ENCODE measurements at regions of chr7 and their contacts with region 1.

Region 1: DNA sequence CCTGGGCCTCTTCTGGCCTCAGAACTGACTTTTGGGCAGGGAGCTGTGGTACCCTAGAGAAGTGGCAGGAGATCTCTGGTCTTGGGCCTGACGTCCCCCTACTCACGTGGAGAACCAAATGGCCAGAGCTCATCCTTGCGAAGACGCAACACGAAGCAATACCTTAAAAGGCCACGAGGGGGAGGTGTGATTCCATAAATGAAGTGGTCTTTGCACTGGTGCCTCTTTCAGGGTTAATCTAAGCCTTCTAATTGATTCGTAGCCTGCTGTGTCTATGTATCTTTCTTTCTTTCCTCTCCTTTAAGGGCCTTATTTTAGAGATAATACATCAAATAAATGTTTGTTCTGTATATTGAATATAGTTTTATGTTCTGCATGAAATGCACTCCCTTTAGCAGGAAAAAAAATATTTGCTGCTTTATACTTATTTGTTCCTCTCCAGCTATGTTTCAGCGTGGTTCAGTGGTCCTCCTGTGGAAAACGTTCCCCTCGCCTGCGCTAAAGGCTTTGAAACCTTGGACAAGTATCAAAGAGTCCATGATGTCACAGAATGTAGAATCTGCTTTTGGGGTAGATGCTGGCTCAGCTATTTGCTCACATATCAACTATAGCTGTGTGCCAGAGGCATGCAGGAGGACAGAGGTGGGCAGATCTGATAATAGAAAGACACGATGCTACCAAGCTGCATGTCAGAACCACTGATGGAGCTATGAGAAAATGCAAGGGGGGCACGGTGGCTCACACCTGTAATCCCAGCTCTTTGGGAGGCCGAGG is 41.0 kb downstream of the STRA8 start:
- DNase-seq: peak; percentile 86
- ATAC-seq: peak; percentile 88
- H3K4me3 Mint-ChIP-seq: no peak overlapping the region
- H3K27ac Mint-ChIP-seq: no peak overlapping the region
- H3K4me1 Mint-ChIP-seq: no peaks in the 10 kb centered on the region
- H3K27me3 Mint-ChIP-seq: peaks cover 4% of the 10 kb centered on the region

Region 2: DNA sequence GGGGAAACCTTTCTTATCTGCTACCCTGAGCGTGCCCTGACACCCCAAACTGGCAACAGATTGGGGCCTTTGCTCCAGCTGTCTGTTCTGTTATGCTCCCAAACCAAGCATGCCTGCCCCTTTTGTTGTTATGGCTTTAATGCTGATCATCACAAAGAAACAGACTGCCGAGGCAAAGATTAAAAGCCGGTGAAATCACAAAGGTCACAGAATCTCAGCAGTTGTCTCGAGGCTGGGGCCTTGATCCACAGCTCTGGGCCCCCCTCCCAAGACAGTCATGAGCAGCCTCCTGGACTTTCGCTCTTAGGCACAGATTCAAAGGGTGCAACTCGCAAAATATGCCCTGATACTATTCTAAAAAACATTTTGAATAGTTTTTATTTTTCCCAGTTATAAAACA is 24.6 kb after region 1 on chr7:
- CTCF ChIA-PET with region 1: interaction called, 20 read pairs
- POLR2A ChIA-PET with region 1: no interaction called
- intact Hi-C with region 1: no loop called
- DNase-seq: no peak
- ATAC-seq: no peak
- H3K4me3 Mint-ChIP-seq: no peak overlapping the region
- H3K27ac Mint-ChIP-seq: no peak overlapping the region
- H3K4me1 Mint-ChIP-seq: no peaks in the 10 kb centered on the region
- H3K27me3 Mint-ChIP-seq: peaks cover 8% of the 10 kb centered on the region

Region 3: GRCh38 chr7:135328053-135328452 is 53.4 kb after region 1 on chr7:
- CTCF ChIA-PET with region 1: no interaction called
- POLR2A ChIA-PET with region 1: no interaction called
- intact Hi-C with region 1: no loop called
- DNase-seq: no peak
- ATAC-seq: no peak
- H3K4me3 Mint-ChIP-seq: no peak overlapping the region
- H3K27ac Mint-ChIP-seq: no peak overlapping the region
- H3K4me1 Mint-ChIP-seq: peaks cover 2% of the 10 kb centered on the region
- H3K27me3 Mint-ChIP-seq: peaks cover 1% of the 10 kb centered on the region

Region 4: DNA sequence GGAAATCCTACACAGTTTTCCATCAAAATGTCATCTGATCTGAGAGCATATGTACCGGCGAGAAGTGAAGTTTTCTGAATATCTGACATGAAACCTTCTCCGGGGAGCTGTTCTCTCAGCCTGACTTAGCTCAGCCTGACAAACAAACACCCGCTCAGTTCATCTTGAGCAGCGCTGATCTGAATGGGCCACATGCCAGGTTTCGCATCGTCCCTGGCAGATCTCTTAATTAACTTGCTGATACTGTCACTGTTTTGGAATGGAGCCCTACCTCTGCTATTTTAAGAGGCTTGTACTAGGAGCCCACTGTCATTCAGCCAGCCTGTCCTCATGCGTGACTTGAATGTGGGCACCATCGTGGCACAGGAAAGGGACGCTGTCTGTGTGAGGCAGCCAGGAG is 68.2 kb after region 1 on chr7:
- CTCF ChIA-PET with region 1: interaction called, 15 read pairs
- POLR2A ChIA-PET with region 1: no interaction called
- intact Hi-C with region 1: no loop called
- DNase-seq: no peak
- ATAC-seq: no peak
- H3K4me3 Mint-ChIP-seq: no peak overlapping the region
- H3K27ac Mint-ChIP-seq: no peak overlapping the region
- H3K4me1 Mint-ChIP-seq: no peaks in the 10 kb centered on the region
- H3K27me3 Mint-ChIP-seq: no peaks in the 10 kb centered on the region

Region 5: GRCh38 chr7:135634191-135634878 is 359.7 kb after region 1 on chr7:
- CTCF ChIA-PET with region 1: no interaction called
- POLR2A ChIA-PET with region 1: no interaction called
- intact Hi-C with region 1: no loop called
- DNase-seq: no peak
- ATAC-seq: no peak
- H3K4me3 Mint-ChIP-seq: no peak overlapping the region
- H3K27ac Mint-ChIP-seq: no peak overlapping the region
- H3K4me1 Mint-ChIP-seq: no peaks in the 10 kb centered on the region
- H3K27me3 Mint-ChIP-seq: no peaks in the 10 kb centered on the region

Region 6: GRCh38 chr7:135795846-135796570 is 521.3 kb after region 1 on chr7:
- CTCF ChIA-PET with region 1: no interaction called
- POLR2A ChIA-PET with region 1: no interaction called
- intact Hi-C with region 1: loop called in 1 of 2 experiments (anchors 5 kb)
- DNase-seq: no peak
- ATAC-seq: no peak
- H3K4me3 Mint-ChIP-seq: no peak overlapping the region
- H3K27ac Mint-ChIP-seq: no peak overlapping the region
- H3K4me1 Mint-ChIP-seq: peaks cover 6% of the 10 kb centered on the region
- H3K27me3 Mint-ChIP-seq: peaks cover 9% of the 10 kb centered on the region

Region 7: DNA sequence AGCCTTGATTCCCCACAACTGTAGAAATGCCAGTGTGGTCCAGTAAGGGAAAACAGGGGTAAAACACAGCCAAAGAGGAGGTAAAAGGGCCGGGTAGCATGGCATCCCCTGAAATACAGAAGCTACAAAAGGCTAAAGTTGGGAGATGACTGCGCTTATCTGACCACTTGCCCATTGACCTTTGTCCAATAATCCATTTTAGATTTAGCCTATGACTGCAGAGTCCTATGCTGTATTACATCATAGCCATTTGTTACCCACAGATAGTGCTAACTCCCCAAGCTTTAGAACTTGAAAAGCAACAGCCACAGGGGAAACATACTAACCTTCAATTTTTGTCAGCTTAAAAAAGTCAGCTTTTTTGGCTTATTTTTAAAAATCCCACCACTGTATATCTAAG is 676.3 kb after region 1 on chr7:
- CTCF ChIA-PET with region 1: no interaction called
- POLR2A ChIA-PET with region 1: no interaction called
- intact Hi-C with region 1: no loop called
- DNase-seq: no peak
- ATAC-seq: no peak
- H3K4me3 Mint-ChIP-seq: no peak overlapping the region
- H3K27ac Mint-ChIP-seq: no peak overlapping the region
- H3K4me1 Mint-ChIP-seq: peaks cover 34% of the 10 kb centered on the region
- H3K27me3 Mint-ChIP-seq: no peaks in the 10 kb centered on the region

Measured in activated CD4-positive, alpha-beta T cell treated with anti-CD3 and anti-CD28 coated beads for 36 hours (primary cell).